CD8-positive, alpha-beta T cell (primary cell): ENCODE measurements at regions of chr5 and their contacts with region 1.

Region 1: GRCh38 chr5:118354797-118355196 is 633.5 kb downstream of the DTWD2 start:
- DNase-seq: no peak
- ATAC-seq: no peak
- H3K4me3 ChIP-seq: no peak overlapping the region
- H3K4me3 Mint-ChIP-seq: no peak overlapping the region
- H3K27ac ChIP-seq: no peak overlapping the region
- H3K27ac Mint-ChIP-seq: no peak overlapping the region
- H3K4me1 ChIP-seq: no peaks in the 10 kb centered on the region
- H3K4me1 Mint-ChIP-seq: no peaks in the 10 kb centered on the region
- H3K27me3 ChIP-seq: no peaks in the 10 kb centered on the region
- H3K27me3 Mint-ChIP-seq: no peaks in the 10 kb centered on the region
- CTCF ChIP-seq: no peak

Region 2: DNA sequence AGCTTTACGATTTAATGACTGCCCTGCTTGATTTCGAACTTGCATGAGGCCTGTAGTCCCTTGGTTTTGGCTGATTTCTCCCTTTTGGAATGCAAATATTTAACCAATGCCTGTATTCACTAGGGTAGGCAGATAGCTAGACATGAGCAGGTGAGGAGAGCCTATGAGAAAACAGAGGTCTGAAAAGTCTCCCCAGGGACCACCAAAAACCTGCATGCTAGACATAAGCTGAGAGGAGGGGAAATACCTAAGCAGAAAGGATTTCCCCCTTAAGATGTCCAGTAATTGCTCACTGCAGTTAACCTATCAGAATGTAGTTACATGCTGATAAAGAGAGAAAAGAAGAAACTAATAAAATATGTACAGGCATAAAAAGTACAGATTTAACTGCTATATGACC is 1112.8 kb before region 1 on chr5:
- CTCF ChIA-PET with region 1: no interaction called
- POLR2A ChIA-PET with region 1: no interaction called
- intact Hi-C with region 1: loop called in 1 of 2 experiments (anchors 5 kb)
- DNase-seq: no peak
- ATAC-seq: no peak
- H3K4me3 ChIP-seq: no peak overlapping the region
- H3K4me3 Mint-ChIP-seq: no peak overlapping the region
- H3K27ac ChIP-seq: no peak overlapping the region
- H3K27ac Mint-ChIP-seq: no peak overlapping the region
- H3K4me1 ChIP-seq: no peaks in the 10 kb centered on the region
- H3K4me1 Mint-ChIP-seq: no peaks in the 10 kb centered on the region
- H3K27me3 ChIP-seq: no peaks in the 10 kb centered on the region
- H3K27me3 Mint-ChIP-seq: no peaks in the 10 kb centered on the region
- CTCF ChIP-seq: no peak